Sciatic nerve (tissue), 2 donors: ENCODE measurements at regions of chr11 and their contacts with region 1.

Region 1: DNA sequence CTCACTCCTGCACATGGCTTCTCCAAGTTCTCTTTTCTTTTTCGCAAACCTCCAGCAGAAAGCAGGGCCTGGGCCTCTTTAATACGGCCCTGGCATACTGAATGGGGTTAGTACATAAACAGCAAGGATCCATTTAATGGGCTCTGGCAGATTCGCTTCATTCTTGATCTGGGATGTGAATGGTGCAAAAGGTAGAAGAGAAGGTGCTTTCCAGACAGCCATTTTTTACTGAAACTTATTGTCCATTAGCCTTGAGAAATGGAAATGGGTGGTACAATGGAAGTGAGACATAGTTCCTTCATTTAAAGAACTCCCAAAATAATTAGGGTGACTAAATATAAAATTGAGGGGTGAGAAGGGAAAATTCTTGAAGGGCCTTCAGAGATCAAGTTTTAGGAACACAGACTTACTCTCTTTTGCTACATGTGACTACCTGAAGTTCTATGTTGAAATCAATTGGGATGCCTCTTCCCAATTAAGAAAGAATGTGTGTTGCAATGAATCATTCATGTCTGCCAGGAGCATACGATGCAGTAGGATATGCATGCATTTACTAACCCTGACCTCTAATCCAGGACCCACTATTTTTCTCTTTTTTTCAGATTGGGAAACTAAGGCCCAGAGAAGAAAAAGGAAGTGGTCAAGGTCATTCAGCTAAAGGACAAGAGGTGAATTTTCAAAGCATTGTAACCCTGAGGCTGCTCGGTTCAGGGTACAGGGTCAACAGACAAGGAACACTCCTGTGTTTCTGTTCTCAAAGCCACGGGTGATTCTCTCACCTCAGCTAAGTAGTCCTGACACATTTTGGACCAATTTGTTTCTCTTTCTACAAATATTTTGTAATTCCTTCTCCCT is 144.1 kb downstream of the BBOX1 start:
- DNase-seq: no peak
- ATAC-seq: no peak

Region 2: DNA sequence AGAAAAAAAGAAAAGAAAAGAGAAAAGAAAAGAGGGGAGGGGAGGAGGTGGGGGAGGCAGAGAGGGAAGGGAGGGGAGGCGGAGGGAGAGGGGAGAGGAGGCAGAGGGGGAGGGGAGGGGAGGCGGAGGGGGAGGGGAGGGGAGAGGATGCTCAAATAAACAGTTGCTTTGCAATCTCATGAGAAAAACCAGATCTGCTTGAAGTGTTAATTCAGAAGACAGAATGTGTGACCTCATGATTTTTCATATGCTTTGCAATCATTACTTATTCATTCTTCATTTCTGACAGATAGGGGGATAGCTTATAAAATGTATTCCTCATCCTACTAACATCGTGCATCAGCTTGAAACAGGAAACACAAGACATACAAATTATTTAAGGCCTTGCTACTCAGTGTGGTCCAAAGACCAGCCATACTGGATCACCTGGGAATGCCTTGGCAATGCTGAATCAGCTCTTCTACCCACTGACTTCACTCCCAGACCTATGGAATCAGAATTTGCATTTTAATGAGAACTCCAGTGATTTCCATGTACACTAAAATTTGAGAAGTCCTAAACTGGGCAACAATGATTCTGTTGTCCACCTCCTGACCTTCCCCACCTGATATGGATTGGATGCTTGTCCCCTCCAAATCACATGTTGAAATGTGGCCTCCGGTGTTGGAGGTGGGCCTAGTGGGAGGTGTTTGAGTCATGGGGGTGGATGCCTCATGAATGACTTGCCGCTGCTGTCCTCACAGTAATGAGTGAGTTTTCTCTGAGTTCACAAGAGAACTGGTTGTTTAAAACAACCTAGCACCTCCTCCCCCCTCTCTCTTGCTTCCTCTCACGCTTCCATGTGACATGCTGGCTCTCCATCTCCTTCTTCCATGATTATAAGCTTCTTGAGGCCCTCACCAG is 109.1 kb after region 1 on chr11:
- intact Hi-C with region 1: loop called (anchors 2 kb)
- DNase-seq: no peak
- ATAC-seq: no peak

Region 3: GRCh38 chr11:27485930-27486773 is 301.5 kb after region 1 on chr11:
- intact Hi-C with region 1: loop called (anchors 5 kb)
- DNase-seq: no peak
- ATAC-seq: peak; percentile 65